ENCODE measurements at regions of chr16 and their contacts with region 1.

Region 1: DNA sequence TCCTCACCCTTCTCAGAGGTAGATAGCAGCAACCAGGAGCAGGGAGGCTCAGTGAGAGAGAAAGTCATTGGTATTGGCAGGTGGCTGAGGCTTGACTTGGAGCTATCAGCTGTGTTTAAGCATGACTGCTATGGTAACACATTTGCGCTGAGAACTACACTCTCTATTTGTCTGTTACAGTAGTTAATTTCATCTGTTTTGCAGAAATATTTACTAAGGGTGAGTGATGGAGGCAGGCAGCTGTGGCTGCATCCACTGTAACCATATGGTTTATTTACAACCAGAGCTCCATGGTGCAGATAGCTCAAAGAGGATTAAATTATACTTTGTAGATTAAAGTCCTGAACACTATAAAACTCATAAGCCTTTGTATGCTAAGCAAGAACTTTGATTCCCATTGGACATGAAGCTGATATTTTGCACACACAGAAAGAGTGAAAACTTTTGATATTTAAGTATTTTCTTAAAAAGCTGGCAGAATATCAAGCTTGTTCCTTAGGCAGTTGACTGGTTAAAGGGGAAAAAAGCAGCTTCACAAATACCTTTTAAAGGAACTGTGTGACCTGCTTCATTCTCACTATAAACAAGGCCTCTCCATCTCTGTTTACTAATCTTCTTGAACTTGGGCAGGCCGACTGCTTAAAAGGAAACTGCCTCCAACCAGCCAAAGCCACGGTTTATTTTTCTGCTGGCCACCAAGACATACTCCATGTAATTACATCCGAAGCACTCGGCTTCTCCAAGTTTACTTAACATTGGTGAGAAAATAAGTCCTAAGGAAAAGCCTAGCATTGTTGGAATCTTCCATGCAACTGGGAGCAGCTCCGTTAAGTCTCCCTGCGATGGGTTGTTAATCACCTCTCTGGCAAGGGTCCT is 299.8 kb upstream of the ZFHX3 start:
- DNase-seq: no peak
- H3K4me3 ChIP-seq: no peak overlapping the region
- H3K27ac ChIP-seq: no peak overlapping the region
- H3K4me1 ChIP-seq: no peaks in the 10 kb centered on the region
- H3K27me3 ChIP-seq: no peaks in the 10 kb centered on the region
- CTCF ChIP-seq: no peak

Region 2: GRCh38 chr16:73113336-73113735 is 234.4 kb before region 1 on chr16:
- CTCF ChIA-PET with region 1: no interaction called
- dilution Hi-C with region 1: no loop called
- in situ Hi-C with region 1: no loop called
- intact Hi-C with region 1: no loop called
- DNase-seq: peak; percentile 82
- H3K4me3 ChIP-seq: no peak overlapping the region
- H3K27ac ChIP-seq: no peak overlapping the region
- H3K4me1 ChIP-seq: no peaks in the 10 kb centered on the region
- H3K27me3 ChIP-seq: no peaks in the 10 kb centered on the region
- CTCF ChIP-seq: no peak

Region 3: GRCh38 chr16:73275024-73275423 is 72.7 kb before region 1 on chr16:
- CTCF ChIA-PET with region 1: no interaction called
- dilution Hi-C with region 1: loop called (anchors 5 kb)
- in situ Hi-C with region 1: no loop called
- intact Hi-C with region 1: no loop called
- DNase-seq: no peak
- H3K4me3 ChIP-seq: no peak overlapping the region
- H3K27ac ChIP-seq: no peak overlapping the region
- H3K4me1 ChIP-seq: no peaks in the 10 kb centered on the region
- H3K27me3 ChIP-seq: no peaks in the 10 kb centered on the region
- CTCF ChIP-seq: no peak

Region 4: GRCh38 chr16:73403291-73403690 is 55.6 kb after region 1 on chr16:
- CTCF ChIA-PET with region 1: no interaction called
- dilution Hi-C with region 1: loop called (anchors 5 kb)
- in situ Hi-C with region 1: no loop called
- intact Hi-C with region 1: no loop called
- DNase-seq: no peak
- H3K4me3 ChIP-seq: no peak overlapping the region
- H3K27ac ChIP-seq: no peak overlapping the region
- H3K4me1 ChIP-seq: no peaks in the 10 kb centered on the region
- H3K27me3 ChIP-seq: no peaks in the 10 kb centered on the region
- CTCF ChIP-seq: no peak